Astrocyte of the cerebellum (primary cell): ENCODE measurements at regions of chr10 and their contacts with region 1.

Region 1: DNA sequence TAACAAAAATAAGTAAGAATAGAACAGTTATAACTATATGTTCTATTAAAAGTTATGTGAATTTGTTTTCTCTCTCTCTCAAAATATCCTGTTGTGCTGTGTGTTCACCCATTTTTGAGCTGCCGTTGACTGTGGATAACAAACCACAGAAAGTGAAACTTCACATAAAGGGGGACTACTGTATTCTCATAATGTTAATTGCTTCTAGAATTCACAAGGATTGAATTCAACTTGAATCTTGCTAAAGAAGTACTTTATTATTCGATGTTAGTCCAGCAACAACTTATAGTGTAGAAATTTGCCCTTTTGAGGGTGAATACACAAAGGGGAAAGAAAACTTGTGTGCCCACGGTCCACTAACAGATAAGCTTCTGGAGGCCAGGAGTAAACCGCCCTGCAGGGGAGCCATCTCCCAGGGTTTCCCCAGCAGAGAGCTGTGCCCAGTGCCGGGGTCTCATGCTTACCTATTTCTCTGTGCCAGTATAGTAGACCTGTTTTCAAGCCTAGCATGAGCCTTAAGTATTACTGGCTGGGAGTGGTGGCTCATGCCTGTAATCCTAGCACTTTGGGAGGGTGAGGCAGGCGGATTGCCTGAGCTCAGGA is 87.1 kb downstream of the KAT6B start:
- DNase-seq: no peak
- H3K4me3 ChIP-seq: no peak overlapping the region
- CTCF ChIP-seq: no peak

Region 2: GRCh38 chr10:74842301-74842954 is 71.0 kb before region 1 on chr10:
- in situ Hi-C with region 1: loop called (anchors 5 kb)
- DNase-seq: no peak
- H3K4me3 ChIP-seq: no peak overlapping the region
- CTCF ChIP-seq: no peak

Region 3: DNA sequence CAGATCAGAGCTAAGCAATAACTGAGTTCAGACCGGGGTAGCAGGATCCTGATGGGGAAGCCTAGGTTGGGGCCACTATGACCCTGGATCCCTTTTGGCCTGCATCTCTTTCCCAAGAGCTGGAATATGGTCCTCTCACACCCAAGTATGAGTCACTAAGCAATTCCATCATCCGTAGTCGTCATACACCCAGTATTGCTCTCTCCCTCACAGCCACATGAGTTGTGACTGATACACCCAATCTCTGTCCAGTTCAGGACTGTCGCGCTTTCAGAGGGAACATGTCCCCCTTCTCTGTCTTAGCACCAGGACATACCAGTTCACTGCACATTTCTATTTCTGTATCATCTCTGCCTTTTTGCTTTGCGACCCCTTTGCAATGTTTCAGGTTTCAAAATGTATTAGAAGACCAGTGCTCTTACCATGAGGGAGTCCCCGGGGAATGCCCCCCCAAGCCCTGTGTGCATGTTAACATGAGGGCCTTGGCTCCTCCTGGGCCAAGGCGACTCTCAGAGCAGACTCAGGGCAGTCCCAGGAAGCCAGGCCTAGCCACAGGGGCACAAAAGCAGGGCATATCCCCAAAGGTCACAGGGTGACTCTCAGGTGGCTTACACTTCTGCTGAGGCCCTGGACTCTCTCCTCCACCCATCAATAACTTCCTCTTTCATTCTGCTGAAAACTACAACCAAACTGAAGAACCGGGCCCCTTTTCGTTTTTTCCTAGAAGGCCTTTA is 122.7 kb after region 1 on chr10:
- in situ Hi-C with region 1: no loop called
- DNase-seq: no peak
- H3K4me3 ChIP-seq: no peak overlapping the region
- CTCF ChIP-seq: no peak

Region 4: GRCh38 chr10:75469006-75469616 is 555.6 kb after region 1 on chr10:
- in situ Hi-C with region 1: no loop called
- DNase-seq: peak; percentile 53
- H3K4me3 ChIP-seq: no peak overlapping the region
- CTCF ChIP-seq: no peak